ENCODE measurements at regions of chr11 and their contacts with region 1.

Region 1: GRCh38 chr11:62394825-62395538 is 23.9 kb upstream of the SCGB1A1 start:
- DNase-seq: peak in 1 of 2 donors; percentile 85
- ATAC-seq: peak; percentile 70 to 86 (median 86)
- H3K4me3 ChIP-seq: no peak overlapping the region
- H3K4me3 Mint-ChIP-seq: no peak overlapping the region
- H3K27ac ChIP-seq: no peak overlapping the region
- H3K27ac Mint-ChIP-seq: no peak overlapping the region
- H3K4me1 ChIP-seq: peaks cover 9% of the 10 kb centered on the region
- H3K4me1 Mint-ChIP-seq: peaks cover 5 to 13% of the 10 kb centered on the region in 2 donors
- H3K27me3 ChIP-seq: no peaks in the 10 kb centered on the region
- H3K27me3 Mint-ChIP-seq: no peaks in the 10 kb centered on the region
- CTCF ChIP-seq: peak; percentile 81

Region 2: GRCh38 chr11:62269650-62270278 is 125.2 kb before region 1 on chr11 and contains the start of gene SCGB2A2:
- intact Hi-C with region 1: no loop called
- DNase-seq: no peak
- ATAC-seq: peak in 1 of 3 donors; percentile 24
- H3K4me3 ChIP-seq: no peak within 1 kb of the TSS
- H3K4me3 Mint-ChIP-seq: no peak within 1 kb of the TSS
- H3K27ac ChIP-seq: no peak within 1 kb of the TSS
- H3K27ac Mint-ChIP-seq: no peak within 1 kb of the TSS
- H3K4me1 ChIP-seq: no peaks in the 10 kb centered on the region
- H3K4me1 Mint-ChIP-seq: no peaks in the 10 kb centered on the region
- H3K27me3 ChIP-seq: no peaks in the 10 kb centered on the region
- H3K27me3 Mint-ChIP-seq: peaks cover 7 to 12% of the 10 kb centered on the region in 2 donors
- CTCF ChIP-seq: no peak
- total RNA-seq, gene SCGB2A2: not detected

Region 3: GRCh38 chr11:62383822-62384221 is 11.2 kb before region 1 on chr11:
- intact Hi-C with region 1: loop called (anchors 2 kb)
- DNase-seq: no peak
- ATAC-seq: no peak
- H3K4me3 ChIP-seq: no peak overlapping the region
- H3K4me3 Mint-ChIP-seq: no peak overlapping the region
- H3K27ac ChIP-seq: no peak overlapping the region
- H3K27ac Mint-ChIP-seq: no peak overlapping the region
- H3K4me1 ChIP-seq: peaks cover 12% of the 10 kb centered on the region
- H3K4me1 Mint-ChIP-seq: peaks cover 12 to 16% of the 10 kb centered on the region in 2 donors
- H3K27me3 ChIP-seq: no peaks in the 10 kb centered on the region
- H3K27me3 Mint-ChIP-seq: no peaks in the 10 kb centered on the region
- CTCF ChIP-seq: no peak

Region 4: DNA sequence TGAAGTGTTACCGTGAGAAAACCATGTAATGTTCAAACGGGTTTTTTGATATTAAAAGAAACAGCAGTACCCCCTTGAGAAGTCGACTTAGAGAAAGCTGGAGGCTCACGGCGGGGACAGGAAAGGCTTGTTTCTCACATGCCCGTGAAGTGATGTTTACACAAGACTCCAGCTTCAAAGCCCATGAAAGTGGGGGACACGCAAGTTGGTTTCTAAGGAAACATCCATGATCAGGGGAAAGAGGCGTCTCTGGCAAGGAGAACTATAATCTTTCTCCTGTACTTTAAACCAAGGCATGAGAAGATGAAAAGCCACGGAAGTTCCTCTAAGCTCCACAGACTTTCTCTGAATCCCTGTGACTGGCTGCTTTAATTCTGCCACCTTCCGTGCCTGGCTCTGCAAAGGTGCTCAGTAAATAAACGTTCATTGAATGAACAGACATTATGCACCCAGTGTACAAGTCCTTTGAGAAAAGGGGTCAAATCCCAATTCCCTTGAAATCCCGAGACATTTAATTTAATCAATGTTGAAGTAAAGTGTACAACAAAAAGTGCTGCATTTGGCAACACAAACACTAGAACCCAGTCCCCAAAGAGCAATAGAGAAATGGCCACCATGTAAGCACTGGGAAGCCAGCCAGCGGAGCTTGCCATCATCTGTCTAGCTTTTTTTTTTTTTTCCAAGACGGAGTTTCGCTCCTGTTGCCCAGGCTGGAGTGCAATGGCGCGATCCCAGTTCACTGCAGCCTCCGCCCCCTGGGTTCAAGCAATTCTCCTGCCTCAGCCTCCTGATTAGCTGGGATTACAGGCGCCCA is 93.0 kb after region 1 on chr11:
- intact Hi-C with region 1: no loop called
- DNase-seq: no peak
- ATAC-seq: no peak
- H3K4me3 ChIP-seq: no peak overlapping the region
- H3K4me3 Mint-ChIP-seq: no peak overlapping the region
- H3K27ac ChIP-seq: no peak overlapping the region
- H3K27ac Mint-ChIP-seq: no peak overlapping the region
- H3K4me1 ChIP-seq: no peaks in the 10 kb centered on the region
- H3K4me1 Mint-ChIP-seq: no peaks in the 10 kb centered on the region
- H3K27me3 ChIP-seq: no peaks in the 10 kb centered on the region
- H3K27me3 Mint-ChIP-seq: no peaks in the 10 kb centered on the region
- CTCF ChIP-seq: no peak

Region 5: GRCh38 chr11:62644220-62644619 is 249.2 kb after region 1 on chr11:
- intact Hi-C with region 1: no loop called
- DNase-seq: no peak
- ATAC-seq: no peak
- H3K4me3 ChIP-seq: no peak overlapping the region
- H3K4me3 Mint-ChIP-seq: peak overlapping the region; percentile 37
- H3K27ac ChIP-seq: no peak overlapping the region
- H3K27ac Mint-ChIP-seq: peak overlapping the region in 1 of 2 donors; percentile 94
- H3K4me1 ChIP-seq: peaks cover 43% of the 10 kb centered on the region
- H3K4me1 Mint-ChIP-seq: peaks cover 18 to 26% of the 10 kb centered on the region in 2 donors
- H3K27me3 ChIP-seq: no peaks in the 10 kb centered on the region
- H3K27me3 Mint-ChIP-seq: no peaks in the 10 kb centered on the region
- CTCF ChIP-seq: no peak

Region 6: DNA sequence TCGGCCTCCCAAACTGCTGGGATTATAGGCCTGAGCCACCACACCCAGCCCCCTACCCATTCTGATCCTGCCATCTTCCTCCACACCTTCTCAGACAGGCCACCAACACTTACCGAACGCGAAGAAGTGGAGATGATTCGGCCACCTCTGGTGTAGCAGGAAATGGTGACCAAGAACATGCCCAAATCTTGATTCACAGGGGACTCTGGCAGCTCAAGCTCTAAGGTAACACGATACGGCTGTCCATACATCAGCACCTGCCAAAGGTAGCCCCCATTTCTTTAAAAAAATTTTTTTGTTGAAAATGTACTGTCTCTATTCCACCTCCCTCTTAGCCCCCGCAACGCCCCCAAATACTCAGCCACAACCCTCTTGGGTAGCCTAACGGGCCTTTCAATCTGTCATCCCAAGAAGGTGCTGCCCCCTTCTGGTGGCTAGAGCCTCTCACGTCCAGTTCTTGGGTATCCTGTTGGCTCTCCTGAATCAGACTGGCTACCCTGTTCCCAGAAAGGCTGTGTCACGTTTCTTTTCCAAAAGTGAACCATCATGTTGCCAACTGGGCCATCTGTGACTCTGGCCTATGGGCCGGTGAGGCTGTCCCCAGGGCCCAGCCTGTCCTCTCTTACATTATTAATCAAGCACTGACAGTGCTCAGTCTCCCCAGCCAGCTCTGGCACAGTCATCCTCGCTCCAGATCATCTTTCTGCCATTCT is 299.6 kb after region 1 on chr11:
- intact Hi-C with region 1: loop called (anchors 1 kb)
- DNase-seq: peak; percentile 72 to 91
- ATAC-seq: peak; percentile 78 to 98 (median 96)
- H3K4me3 ChIP-seq: no peak overlapping the region
- H3K4me3 Mint-ChIP-seq: no peak overlapping the region
- H3K27ac ChIP-seq: no peak overlapping the region
- H3K27ac Mint-ChIP-seq: peak overlapping the region in 1 of 2 donors; percentile 7
- H3K4me1 ChIP-seq: no peaks in the 10 kb centered on the region
- H3K4me1 Mint-ChIP-seq: peaks cover 8% of the 10 kb centered on the region in 2 donors
- H3K27me3 ChIP-seq: no peaks in the 10 kb centered on the region
- H3K27me3 Mint-ChIP-seq: no peaks in the 10 kb centered on the region
- CTCF ChIP-seq: peak; percentile 84

Region 7: DNA sequence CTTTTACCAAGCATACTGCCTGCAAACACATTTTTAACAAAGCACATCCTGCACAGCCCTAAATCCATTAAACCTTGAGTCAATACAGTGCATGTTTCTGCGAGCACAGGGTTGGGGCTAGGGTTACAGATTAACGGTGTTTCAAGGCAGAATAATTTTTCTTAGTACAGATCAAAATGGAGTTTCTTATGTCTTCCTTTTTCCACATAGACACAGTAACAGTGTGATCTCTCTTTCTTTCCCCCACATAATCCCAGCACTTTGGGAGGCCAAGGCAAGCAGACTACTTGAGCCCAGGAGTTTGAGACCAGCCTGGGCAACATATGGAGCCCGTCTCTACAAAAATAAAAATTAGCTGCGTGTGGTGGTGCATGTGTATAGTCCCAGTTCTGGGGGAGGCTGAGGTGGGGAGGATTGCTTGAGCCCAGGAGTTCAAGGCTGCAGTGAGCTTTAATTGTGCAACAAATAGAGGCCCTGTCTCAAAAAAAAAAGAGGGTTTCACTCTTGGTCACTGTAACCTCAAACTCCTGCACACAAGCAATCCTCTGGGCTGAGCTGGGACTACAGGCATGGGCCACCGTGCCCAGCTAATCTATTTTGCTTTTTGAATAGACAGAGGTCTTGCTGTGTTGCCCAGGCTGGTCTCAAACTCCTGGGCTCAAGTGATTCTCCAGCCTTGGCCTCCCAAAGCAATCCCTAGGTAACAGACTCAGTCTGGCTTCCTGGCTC is 466.0 kb after region 1 on chr11:
- intact Hi-C with region 1: loop called (anchors 10 kb)
- DNase-seq: no peak
- ATAC-seq: no peak
- H3K4me3 ChIP-seq: no peak overlapping the region
- H3K4me3 Mint-ChIP-seq: no peak overlapping the region
- H3K27ac ChIP-seq: no peak overlapping the region
- H3K27ac Mint-ChIP-seq: no peak overlapping the region
- H3K4me1 ChIP-seq: peaks cover 17% of the 10 kb centered on the region
- H3K4me1 Mint-ChIP-seq: peaks cover 12% of the 10 kb centered on the region in 2 donors
- H3K27me3 ChIP-seq: no peaks in the 10 kb centered on the region
- H3K27me3 Mint-ChIP-seq: no peaks in the 10 kb centered on the region
- CTCF ChIP-seq: no peak